ENCODE measurements at regions of chr15 and their contacts with region 1.

Region 1: DNA sequence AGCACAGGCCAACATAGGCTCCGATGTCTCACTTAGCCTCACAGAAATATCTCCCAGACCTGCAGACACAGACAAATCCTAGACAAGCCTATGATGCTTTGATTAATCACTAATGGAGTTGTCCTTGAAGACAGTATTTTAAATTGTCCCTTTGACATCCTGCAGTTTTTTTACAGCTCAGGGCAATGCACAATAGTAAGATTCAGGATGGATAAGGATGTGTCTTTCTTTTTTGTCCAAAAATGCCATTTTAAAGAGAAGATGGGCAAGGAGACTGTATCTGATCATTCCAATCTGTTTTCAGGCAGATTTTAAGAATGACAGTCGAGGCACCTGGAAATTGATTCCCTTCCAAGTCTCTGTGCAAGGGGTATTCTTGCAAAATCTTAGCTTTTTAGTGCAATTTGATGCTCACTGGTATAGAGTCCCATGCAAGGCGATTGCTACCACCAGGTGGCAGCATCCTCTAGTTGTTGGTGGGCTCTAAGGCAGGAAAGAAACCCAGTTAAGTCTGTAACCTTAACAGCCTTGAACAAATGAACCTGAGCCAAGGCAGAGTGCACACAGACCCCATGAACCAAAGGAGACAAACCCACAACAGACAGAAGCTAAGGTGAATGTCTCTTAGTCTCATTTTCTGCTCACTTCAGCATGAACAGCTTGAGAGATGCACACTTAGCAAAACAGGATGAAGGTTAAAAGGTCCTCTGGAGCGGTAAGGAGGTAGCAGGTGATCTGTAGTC is 51.2 kb upstream of the MINAR1 start:
- DNase-seq: peak; percentile 75

Region 2: GRCh38 chr15:79418693-79419279 is 37.9 kb after region 1 on chr15:
- CTCF ChIA-PET with region 1: no interaction called
- POLR2A ChIA-PET with region 1: no interaction called
- DNase-seq: no peak

Region 3: DNA sequence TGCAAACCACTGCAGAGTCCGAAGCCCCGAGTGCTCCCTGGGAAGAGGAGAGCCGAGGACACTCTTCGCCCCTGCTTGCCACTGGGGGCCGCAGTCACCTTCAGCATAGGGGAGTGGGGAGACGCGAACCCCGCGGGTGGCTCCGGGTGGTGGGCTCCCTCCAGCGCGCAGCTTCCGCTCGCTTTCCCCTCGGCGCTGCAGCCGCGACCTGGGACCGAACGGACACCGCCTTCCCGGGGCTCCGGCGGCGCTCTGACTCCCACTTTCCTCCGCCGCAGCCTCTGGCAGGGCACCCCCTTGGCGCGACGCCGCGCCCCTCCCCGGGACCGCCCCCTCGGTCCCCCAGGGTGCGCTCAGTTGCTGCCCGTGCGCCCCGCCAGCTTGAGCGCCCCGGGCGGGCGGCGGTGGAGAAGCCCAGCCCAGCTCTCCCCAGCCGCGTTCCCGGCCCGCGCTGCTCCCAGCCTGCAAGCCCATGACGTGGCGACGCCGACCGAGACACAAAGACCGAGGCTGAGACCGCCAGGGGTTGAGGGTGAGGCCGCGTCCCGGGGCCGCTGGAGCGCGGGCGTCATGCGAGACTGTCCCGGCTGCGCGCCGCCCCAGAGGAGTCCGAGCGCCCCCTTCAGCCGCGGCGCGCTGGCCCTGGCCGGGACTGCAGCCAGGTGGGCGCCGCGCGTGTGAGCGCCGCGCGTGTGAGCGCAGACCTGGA is 50.9 kb after region 1 on chr15 and contains the start of gene MINAR1:
- CTCF ChIA-PET with region 1: interaction called, 10 read pairs
- POLR2A ChIA-PET with region 1: no interaction called
- DNase-seq: peak; percentile 68

Region 4: GRCh38 chr15:79505956-79506355 is 125.0 kb after region 1 on chr15:
- CTCF ChIA-PET with region 1: no interaction called
- POLR2A ChIA-PET with region 1: no interaction called
- DNase-seq: no peak

Region 5: GRCh38 chr15:79523266-79523665 is 142.3 kb after region 1 on chr15:
- CTCF ChIA-PET with region 1: no interaction called
- POLR2A ChIA-PET with region 1: no interaction called
- DNase-seq: no peak

Region 6: GRCh38 chr15:79853458-79854328 is 472.8 kb after region 1 on chr15:
- CTCF ChIA-PET with region 1: interaction called, 21 read pairs
- POLR2A ChIA-PET with region 1: no interaction called
- DNase-seq: peak; percentile 75